ENCODE measurements at regions of chr15 and their contacts with region 1.

Region 1: GRCh38 chr15:90954712-90955671 is at the start of gene RCCD1:
- DNase-seq: peak; percentile 84 to 97
- H3K4me3 ChIP-seq: peak within 1 kb of the TSS; percentile 75 to 80
- H3K27ac ChIP-seq: peak within 1 kb of the TSS; percentile 82 to 96
- H3K4me1 ChIP-seq: peaks cover 5 to 32% of the 10 kb centered on the region in 2 donors
- H3K27me3 ChIP-seq: no peaks in the 10 kb centered on the region
- CTCF ChIP-seq: peak in 1 of 3 experiments; percentile 6
- total RNA-seq, gene RCCD1: 10.0 TPM

Region 2: GRCh38 chr15:90924375-90924774 is 30.6 kb before region 1 on chr15:
- intact Hi-C with region 1: no loop called
- DNase-seq: no peak
- H3K4me3 ChIP-seq: no peak overlapping the region
- H3K27ac ChIP-seq: no peak overlapping the region
- H3K4me1 ChIP-seq: no peaks in the 10 kb centered on the region
- H3K27me3 ChIP-seq: no peaks in the 10 kb centered on the region
- CTCF ChIP-seq: no peak

Region 3: GRCh38 chr15:90994417-90995311 is 39.7 kb after region 1 on chr15 and contains the start of gene PRC1:
- intact Hi-C with region 1: loop called (anchors 1 kb)
- DNase-seq: peak; percentile 93 to 99
- H3K4me3 ChIP-seq: peak within 1 kb of the TSS; percentile 82 to 89
- H3K27ac ChIP-seq: peak within 1 kb of the TSS; percentile 92 to 95
- H3K4me1 ChIP-seq: peaks cover 4 to 5% of the 10 kb centered on the region in 2 donors
- H3K27me3 ChIP-seq: no peaks in the 10 kb centered on the region
- CTCF ChIP-seq: no peak
- total RNA-seq, gene PRC1: 29.1 TPM

Region 4: DNA sequence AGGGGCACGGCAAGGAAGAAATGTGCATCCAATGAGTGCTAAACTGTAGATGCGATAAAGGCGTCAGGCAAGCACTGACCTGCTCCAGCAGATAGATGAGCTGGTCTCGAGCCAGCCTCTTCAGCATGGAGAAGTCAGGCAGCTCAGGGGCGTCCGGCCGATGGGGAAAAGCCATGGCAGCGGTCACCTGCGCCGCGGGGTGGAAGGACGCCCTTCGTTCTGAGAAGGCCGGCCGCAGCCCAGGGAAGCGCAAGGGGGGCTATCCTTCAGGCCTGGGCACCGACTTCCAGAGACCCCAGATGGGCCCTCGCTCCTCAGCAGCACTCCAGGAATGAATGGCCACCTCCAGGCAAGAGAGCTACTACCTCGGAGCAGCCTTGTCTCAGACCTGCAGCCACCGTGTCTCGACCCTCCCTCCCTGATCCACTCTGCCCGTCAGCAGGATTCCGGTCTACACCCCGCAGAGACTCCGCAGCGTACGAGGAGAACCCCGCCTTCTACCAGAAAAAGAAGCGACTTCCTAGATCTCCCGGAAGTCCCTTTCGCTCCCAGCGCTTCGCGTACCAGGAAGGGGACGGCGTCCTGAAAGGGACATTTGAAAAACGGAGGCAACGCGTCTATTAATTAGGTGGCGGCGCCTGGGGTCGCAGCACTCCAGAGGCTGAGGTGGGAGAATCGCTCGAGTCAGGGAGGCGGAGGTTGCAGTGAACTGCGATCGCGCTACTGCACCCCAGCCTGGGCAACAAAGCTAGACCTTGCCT is 67.3 kb after region 1 on chr15 and contains the start of gene VPS33B:
- intact Hi-C with region 1: loop called (anchors 2 kb)
- DNase-seq: peak; percentile 30 to 93
- H3K4me3 ChIP-seq: peak within 1 kb of the TSS; percentile 95 to 99
- H3K27ac ChIP-seq: peak within 1 kb of the TSS; percentile 71 to 82
- H3K4me1 ChIP-seq: peaks cover 0 to 8% of the 10 kb centered on the region in 2 donors
- H3K27me3 ChIP-seq: no peaks in the 10 kb centered on the region
- CTCF ChIP-seq: no peak
- total RNA-seq, gene VPS33B: 0.53 TPM

Region 5: DNA sequence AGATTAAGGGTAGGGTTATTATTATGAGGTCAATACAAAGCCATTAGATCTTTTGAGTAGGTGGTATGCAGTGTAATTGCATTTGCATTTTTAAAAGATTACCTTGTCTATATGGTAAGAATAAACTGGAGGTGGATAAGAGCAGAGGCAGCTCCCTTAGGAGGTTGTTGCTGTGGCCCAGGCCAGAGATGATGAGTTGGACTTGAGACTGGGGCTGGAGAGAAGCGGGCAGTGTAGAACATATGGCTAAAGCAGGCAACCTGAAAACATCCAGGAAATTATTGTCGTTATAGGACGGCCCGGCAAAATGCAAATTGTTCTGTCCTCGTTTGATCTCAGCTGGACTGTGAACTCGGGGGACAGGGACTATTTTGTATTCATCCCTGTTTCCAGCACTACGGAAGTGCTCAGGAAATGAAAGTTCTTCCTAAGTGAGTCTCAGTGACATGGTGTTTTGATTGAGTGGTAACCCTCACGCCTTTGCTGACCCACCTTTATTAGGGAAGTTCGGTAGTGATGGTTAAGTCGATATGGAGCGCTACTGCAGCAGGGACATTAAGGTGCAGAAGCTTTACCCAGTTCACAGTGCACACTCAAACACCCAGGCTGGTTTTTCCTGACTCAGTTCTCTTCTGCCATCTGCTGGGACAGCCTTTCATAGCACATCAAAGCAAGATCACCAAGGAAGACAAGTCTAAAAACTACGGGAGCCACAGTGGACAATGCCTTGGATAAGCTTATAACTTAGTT is 94.6 kb after region 1 on chr15:
- intact Hi-C with region 1: loop called (anchors 1 kb)
- DNase-seq: peak in 1 of 2 donors; percentile 78
- H3K4me3 ChIP-seq: no peak overlapping the region
- H3K27ac ChIP-seq: no peak overlapping the region
- H3K4me1 ChIP-seq: no peaks in the 10 kb centered on the region
- H3K27me3 ChIP-seq: no peaks in the 10 kb centered on the region
- CTCF ChIP-seq: peak; percentile 50 to 64 (median 57)

Region 6: GRCh38 chr15:91271565-91272153 is 316.7 kb after region 1 on chr15:
- intact Hi-C with region 1: loop called (anchors 5 kb)
- DNase-seq: peak in 1 of 2 donors; percentile 76
- H3K4me3 ChIP-seq: no peak overlapping the region
- H3K27ac ChIP-seq: no peak overlapping the region
- H3K4me1 ChIP-seq: no peaks in the 10 kb centered on the region
- H3K27me3 ChIP-seq: no peaks in the 10 kb centered on the region
- CTCF ChIP-seq: peak; percentile 68 to 82 (median 71)

Measured in ascending aorta (tissue), 2 donors.